ENCODE measurements at regions of chr1 and their contacts with region 1.

Region 1: DNA sequence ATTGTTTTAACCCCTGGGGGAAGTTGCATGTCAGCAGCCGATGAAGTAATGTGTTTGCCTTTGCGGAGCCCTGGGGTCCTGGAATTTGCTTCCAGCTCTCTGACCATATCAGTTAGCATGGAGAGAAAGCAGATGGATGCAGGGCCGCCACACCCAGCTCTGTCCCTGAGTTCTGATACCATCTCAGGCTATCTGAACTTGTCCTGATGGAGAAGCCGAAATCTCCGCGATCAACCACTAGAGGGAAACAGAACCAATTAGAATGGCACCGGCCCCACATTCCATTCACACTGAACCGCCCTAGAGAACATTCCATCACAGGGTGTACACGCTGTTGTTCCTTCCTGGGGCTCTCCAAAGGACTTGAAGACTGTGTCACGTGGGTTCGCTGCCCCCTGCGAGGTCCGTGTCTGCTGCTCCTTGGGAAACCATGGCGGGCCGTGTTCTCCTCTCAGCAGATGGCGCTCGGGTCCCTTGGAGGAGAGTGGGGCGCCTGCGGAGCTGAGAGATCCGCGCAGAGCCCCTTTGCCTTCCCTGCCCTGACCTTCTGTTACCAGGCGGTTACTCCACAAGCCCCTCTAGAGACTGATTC is 75.4 kb downstream of the ABCA4 start:
- DNase-seq: peak; percentile 59
- ATAC-seq: peak; percentile 68
- H3K4me3 Mint-ChIP-seq: peak overlapping the region; percentile 47
- H3K27ac Mint-ChIP-seq: no peak overlapping the region
- H3K4me1 Mint-ChIP-seq: peaks cover 5% of the 10 kb centered on the region
- H3K27me3 Mint-ChIP-seq: peaks cover 13% of the 10 kb centered on the region
- CTCF ChIP-seq: peak; percentile 61

Region 2: GRCh38 chr1:94025383-94026340 is 19.9 kb before region 1 on chr1:
- CTCF ChIA-PET with region 1: interaction called, 61 read pairs
- POLR2A ChIA-PET with region 1: no interaction called
- intact Hi-C with region 1: no loop called
- DNase-seq: no peak
- ATAC-seq: no peak
- H3K4me3 Mint-ChIP-seq: no peak overlapping the region
- H3K27ac Mint-ChIP-seq: no peak overlapping the region
- H3K4me1 Mint-ChIP-seq: no peaks in the 10 kb centered on the region
- H3K27me3 Mint-ChIP-seq: no peaks in the 10 kb centered on the region
- CTCF ChIP-seq: peak; percentile 62

Region 3: DNA sequence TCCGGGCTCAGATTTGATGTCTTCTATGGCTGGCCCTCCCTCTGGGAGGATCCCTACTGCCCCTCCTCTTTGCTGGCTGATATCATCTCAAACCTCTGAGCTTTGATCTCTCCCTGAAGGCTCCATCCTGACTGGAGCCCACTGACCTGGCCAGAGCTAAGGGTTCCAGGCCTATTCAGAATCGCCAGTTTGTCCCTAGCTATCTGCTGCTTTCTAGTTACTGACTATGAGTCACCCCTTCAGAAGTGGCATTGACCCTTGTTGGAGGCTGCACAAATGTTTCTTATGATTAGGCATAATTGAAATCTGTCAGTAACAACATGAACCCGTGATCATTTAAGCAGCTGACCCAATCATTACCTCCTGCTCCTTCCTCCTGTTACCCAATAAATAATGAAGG is 11.7 kb before region 1 on chr1:
- CTCF ChIA-PET with region 1: interaction called, 30 read pairs
- POLR2A ChIA-PET with region 1: interaction called, 4 read pairs
- intact Hi-C with region 1: no loop called
- DNase-seq: no peak
- ATAC-seq: no peak
- H3K4me3 Mint-ChIP-seq: no peak overlapping the region
- H3K27ac Mint-ChIP-seq: no peak overlapping the region
- H3K4me1 Mint-ChIP-seq: peaks cover 5% of the 10 kb centered on the region
- H3K27me3 Mint-ChIP-seq: peaks cover 21% of the 10 kb centered on the region
- CTCF ChIP-seq: no peak

Region 4: DNA sequence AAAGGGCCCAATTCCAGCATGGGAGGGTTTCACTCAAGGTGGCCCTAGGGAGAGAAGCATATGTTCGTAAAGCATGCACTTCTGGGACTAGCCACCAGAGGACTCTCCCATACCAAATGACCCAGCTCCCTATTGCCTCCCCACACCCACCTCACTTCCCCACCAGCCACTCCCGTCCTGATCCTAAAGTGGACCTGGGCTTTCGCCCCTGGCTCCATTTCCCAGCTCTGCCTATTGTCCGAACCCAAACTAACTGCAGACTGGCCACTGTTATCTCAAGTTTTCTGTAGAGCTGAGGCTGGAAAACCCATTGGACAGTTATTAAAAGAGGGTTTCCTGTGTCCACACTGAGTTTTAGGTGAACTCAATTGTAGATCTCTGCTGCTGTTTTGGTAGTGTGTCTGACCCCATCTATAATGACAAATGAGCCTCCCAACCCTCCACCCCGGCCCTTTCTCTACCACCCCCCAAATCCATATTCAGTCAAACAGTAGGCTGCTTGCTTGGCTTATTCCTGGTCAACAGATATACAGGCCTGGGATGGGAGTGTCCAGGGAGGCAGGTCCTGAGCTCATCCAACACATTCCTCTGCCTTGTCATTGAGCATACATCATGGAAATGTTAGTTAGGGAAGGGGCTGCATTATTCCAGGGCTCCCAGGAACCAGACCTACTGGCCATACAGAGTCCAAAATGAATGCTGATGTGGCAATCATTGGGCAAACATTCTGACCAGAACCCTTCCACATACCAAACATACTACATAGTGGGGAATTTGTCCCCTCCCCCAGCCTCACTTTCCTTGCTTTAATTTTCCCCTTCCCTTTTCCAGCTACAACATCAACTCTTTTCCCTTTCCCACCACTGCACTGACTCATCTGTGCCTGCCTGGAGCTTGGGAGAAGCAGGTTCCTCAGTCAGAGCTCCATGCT is 16.2 kb after region 1 on chr1:
- CTCF ChIA-PET with region 1: interaction called, 26 read pairs
- POLR2A ChIA-PET with region 1: no interaction called
- intact Hi-C with region 1: no loop called
- DNase-seq: peak; percentile 67
- ATAC-seq: peak; percentile 85
- H3K4me3 Mint-ChIP-seq: no peak overlapping the region
- H3K27ac Mint-ChIP-seq: no peak overlapping the region
- H3K4me1 Mint-ChIP-seq: no peaks in the 10 kb centered on the region
- H3K27me3 Mint-ChIP-seq: peaks cover 4% of the 10 kb centered on the region
- CTCF ChIP-seq: peak; percentile 85

Region 5: GRCh38 chr1:94335950-94336349 is 290.4 kb after region 1 on chr1:
- CTCF ChIA-PET with region 1: interaction called, 37 read pairs
- POLR2A ChIA-PET with region 1: no interaction called
- intact Hi-C with region 1: no loop called
- DNase-seq: peak; percentile 51
- ATAC-seq: no peak
- H3K4me3 Mint-ChIP-seq: no peak overlapping the region
- H3K27ac Mint-ChIP-seq: no peak overlapping the region
- H3K4me1 Mint-ChIP-seq: no peaks in the 10 kb centered on the region
- H3K27me3 Mint-ChIP-seq: peaks cover 8% of the 10 kb centered on the region
- CTCF ChIP-seq: peak; percentile 69

Region 6: GRCh38 chr1:94463765-94464330 is 418.3 kb after region 1 on chr1:
- CTCF ChIA-PET with region 1: interaction called, 10 read pairs
- POLR2A ChIA-PET with region 1: no interaction called
- intact Hi-C with region 1: loop called (anchors 5 kb)
- DNase-seq: no peak
- ATAC-seq: peak; percentile 67
- H3K4me3 Mint-ChIP-seq: no peak overlapping the region
- H3K27ac Mint-ChIP-seq: no peak overlapping the region
- H3K4me1 Mint-ChIP-seq: no peaks in the 10 kb centered on the region
- H3K27me3 Mint-ChIP-seq: no peaks in the 10 kb centered on the region
- CTCF ChIP-seq: peak; percentile 49

Measured in activated CD8-positive, alpha-beta T cell treated with anti-CD3 and anti-CD28 coated beads for 36 hours (primary cell).